Right ventricle myocardium inferior (tissue), 1 donor: ENCODE measurements at regions of chr14 and their contacts with region 1.

Region 1: DNA sequence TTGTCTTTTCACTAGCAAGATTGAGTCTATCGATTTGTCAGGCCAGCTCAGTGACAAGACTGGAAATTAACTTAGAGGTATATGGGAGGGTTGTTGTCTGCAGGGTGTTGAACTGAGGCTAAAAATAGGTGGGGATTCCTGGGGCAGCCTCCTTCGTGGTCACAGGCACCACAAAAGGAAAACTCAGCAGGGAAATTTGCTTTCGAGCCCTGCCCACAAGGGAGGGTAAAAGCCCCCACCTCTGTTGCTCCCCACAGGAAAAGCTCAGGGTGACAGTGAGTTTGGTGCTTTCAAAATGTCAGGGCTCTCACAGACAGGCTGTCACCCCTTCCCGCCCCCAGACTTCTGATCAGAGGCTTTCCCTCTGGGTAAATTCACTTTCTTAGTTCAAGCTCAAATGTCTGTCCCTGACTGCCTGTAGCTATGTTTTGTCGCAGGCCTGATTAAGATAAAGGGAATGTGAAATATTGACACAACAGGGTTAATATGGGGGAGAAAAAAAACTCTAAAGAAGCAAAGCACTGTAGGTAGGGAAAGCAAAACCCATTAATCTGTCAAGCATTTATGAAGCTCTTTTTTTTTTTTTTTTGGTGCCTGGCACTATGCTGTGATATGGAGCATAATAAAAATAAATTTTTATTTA is 11.7 kb upstream of the NFKBIA start:
- DNase-seq: no peak
- ATAC-seq: no peak

Region 2: DNA sequence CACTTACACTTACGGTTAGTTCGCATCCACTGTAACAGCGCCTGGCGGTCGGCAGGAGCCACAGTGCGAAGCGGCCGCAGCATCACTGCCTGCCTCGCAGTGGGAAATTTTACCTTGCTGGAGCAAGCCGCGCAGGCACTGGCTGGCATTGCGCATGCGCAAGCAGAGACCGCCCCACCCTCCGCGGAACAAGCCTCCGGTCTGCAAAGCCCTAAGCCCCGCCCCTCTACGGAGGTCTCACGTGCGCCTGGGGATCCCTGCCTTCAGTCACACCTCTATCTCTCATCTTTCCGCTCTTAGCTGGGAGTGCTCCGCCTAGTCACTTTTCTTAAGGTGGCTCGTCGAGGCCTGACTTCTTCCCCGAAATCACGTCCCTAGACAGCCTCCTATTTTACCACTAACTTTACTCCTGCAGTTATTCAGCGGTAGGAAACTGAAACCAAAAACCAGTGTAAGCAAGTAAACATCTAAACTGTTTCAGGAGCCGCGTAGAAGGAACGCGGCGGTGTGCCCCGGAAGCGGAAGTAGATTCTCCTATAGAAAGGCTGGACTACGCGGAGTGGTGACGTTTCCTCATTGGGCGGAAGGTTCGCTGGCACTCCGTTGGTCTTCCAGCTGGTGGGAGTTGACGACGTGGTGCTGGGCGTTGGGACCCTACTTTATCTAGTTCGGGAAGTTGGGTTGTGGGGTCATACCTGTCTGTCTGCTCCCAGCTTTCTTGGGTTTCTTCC is 433.6 kb before region 1 on chr14 and contains the start of gene SRP54:
- intact Hi-C with region 1: loop called (anchors 10 kb)
- DNase-seq: peak; percentile 98
- ATAC-seq: peak; percentile 98
- total RNA-seq, gene SRP54: 29.6 TPM

Region 3: GRCh38 chr14:35140718-35141581 is 275.3 kb before region 1 on chr14:
- intact Hi-C with region 1: loop called (anchors 2 kb)
- DNase-seq: no peak
- ATAC-seq: no peak

Region 4: DNA sequence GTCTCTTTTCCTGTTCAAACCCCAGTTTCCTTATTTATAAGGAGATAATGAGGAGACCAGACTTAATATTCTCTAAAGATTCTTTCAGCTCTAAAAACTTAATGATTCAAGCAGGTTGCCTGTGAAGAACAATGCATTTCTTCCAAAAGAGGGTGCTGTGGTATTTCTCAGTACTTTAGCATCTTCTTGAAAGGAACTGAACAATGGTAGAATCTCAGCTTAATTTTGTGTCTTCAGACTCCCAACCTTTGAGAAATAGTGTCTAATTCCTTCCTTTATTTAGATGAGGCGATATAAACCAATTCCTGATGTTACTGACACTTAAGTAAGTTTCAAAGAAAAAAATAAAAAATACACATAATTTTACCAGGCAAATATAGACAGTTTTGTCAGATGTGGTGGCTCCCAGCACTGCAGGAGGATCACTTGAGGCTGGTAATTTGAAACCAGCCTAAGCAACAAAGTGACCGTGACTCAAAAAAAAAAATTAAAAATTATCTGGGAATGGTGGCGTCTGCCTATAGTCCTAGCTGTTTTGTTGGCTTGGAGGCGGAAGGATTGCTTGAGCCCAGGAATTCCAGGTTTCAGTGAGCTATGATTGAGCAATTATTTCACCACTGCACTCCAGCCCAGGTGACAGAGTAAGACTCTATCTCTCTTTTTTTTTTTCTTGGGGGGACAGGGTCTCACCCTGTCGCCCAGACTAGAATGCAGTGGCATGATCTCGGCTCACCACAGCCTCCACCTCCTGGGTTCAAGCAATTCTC is 200.9 kb before region 1 on chr14:
- intact Hi-C with region 1: loop called (anchors 2 kb)
- DNase-seq: no peak
- ATAC-seq: no peak

Region 5: DNA sequence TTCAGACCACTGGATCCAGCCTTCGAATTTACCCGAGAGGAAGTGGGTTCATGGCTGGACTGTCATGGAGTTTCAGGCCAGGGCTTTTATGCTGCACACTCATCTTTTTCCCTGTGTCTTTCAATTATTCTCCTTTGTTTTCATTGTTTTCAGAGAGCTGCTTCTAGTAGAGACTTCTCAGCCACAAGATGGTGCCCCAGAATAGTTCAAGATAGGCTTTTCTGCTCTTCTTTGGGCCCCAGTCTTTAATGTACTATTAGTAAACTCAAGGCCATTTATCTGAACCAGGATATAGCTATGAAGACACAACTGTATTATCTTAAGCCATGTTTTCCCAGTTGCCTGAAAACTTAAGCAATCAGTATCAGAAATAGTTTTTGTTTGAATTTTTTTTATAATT is 154.5 kb before region 1 on chr14:
- intact Hi-C with region 1: loop called (anchors 2 kb)
- DNase-seq: no peak
- ATAC-seq: no peak